IMR-90 (cell line): ENCODE measurements at regions of chr2 and their contacts with region 1.

Region 1: DNA sequence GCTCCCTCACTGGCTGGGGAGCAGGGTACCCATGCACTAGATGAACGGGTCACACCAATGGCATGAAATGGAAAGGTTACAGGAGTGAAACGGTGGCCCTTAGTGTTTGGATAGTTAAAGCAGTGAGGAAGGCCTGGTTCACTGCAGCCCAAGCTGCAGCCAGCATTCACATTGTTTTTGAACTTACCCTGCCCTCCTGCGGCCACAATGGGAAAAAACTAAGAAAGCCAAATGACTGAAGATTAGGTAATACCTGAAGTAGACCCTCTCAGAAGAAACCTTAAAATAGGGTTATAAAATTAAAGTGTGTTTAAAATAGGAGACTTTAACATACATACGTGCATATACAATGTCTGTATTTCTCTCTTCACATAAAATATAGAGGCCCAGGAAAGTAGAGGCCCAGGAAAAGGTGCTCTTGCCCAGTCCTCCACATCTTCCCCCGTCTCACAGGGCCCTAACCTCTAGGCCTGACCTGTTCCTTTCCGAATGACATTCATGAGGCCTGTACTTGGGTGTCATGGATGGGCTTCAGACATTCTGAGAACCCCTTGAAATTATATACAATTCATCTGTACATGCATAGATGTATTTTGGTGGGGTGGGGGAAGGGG is 33.3 kb downstream of the DOK1 start:
- DNase-seq: peak; percentile 74
- ATAC-seq: peak; percentile 88
- H3K4me3 ChIP-seq: no peak overlapping the region
- H3K27ac ChIP-seq: no peak overlapping the region
- H3K4me1 ChIP-seq: peaks cover 10% of the 10 kb centered on the region
- H3K27me3 ChIP-seq: peaks cover 10% of the 10 kb centered on the region
- CTCF ChIP-seq: peak; percentile 88
- POLR2A ChIP-seq: peak; percentile 47; the same call in 1 of the 2 replicates
- RAD21 ChIP-seq: peak; percentile 90

Region 2: DNA sequence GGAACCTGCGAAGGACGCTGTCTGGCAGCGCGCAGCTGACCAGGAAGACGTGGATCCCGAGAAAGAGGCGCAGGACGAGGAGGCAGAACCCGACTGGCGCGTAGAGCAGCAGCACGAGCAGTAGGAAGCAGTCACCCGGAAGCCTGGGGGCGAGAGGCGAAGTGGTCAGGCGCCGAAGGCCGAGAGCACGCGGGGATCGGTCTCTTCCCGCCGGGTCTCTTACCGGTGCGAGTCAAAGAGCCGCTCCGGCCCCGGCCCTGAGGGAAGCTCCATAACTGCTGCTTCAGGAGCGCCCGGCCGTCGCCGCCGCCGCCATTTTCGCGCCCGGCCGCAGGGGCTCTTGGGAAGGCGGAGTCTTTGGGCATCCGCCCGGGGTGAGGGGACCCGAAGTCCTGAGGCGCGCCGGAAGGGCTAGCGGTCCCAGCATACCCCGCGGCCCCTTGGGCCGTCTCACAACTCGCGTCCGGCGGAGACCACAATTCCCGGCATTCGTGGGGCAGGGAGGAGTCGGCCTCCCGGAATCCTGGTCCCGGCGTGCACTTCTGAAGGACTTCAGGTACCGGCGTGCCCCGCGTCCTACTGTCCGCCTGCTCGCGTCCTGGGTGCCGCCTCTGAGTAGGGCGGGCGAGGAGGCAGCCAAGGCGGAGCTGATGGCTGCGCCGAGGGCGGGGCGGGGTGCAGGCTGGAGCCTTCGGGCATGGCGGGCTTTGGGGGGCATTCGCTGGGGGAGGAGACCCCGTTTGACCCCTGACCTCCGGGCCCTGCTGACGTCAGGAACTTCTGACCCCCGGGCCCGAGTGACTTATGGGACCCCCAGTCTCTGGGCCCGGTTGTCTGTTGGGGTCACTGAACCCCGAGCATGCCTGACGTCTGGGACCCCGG is 58.2 kb before region 1 on chr2 and contains the starts of genes AUP1 and HTRA2:
- CTCF ChIA-PET with region 1: interaction called, 14 read pairs
- POLR2A ChIA-PET with region 1: interaction called, 4 read pairs
- dilution Hi-C with region 1: no loop called
- in situ Hi-C with region 1: no loop called
- intact Hi-C with region 1: loop called (anchors 1 kb)
- DNase-seq: peak; percentile 99
- ATAC-seq: peak; percentile 93
- H3K4me3 ChIP-seq: peak within 1 kb of the TSS; percentile 93
- H3K27ac ChIP-seq: peak within 1 kb of the TSS; percentile 85
- H3K4me1 ChIP-seq: peaks cover 12% of the 10 kb centered on the region
- H3K27me3 ChIP-seq: no peaks in the 10 kb centered on the region
- CTCF ChIP-seq: no peak
- POLR2A ChIP-seq: peak; percentile 93
- RAD21 ChIP-seq: peak; percentile 6
- total RNA-seq, gene AUP1: 45.8 and 47.5 TPM in 2 replicates
- total RNA-seq, gene HTRA2: 28.1 and 34.2 TPM in 2 replicates

Region 3: GRCh38 chr2:74553892-74554645 is 33.7 kb before region 1 on chr2 and contains the start of gene LOXL3:
- CTCF ChIA-PET with region 1: interaction called, 3 read pairs
- POLR2A ChIA-PET with region 1: interaction called, 19 read pairs
- dilution Hi-C with region 1: no loop called
- in situ Hi-C with region 1: no loop called
- intact Hi-C with region 1: loop called (anchors 1 kb)
- DNase-seq: peak; percentile 88
- ATAC-seq: peak; percentile 85
- H3K4me3 ChIP-seq: peak within 1 kb of the TSS; percentile 78
- H3K27ac ChIP-seq: peak within 1 kb of the TSS; percentile 91
- H3K4me1 ChIP-seq: peaks cover 23% of the 10 kb centered on the region
- H3K27me3 ChIP-seq: no peaks in the 10 kb centered on the region
- CTCF ChIP-seq: no peak
- POLR2A ChIP-seq: peak; percentile 30; the same call in 1 of the 2 replicates
- RAD21 ChIP-seq: no peak
- total RNA-seq, gene LOXL3: 14.2 and 17.9 TPM in 2 replicates

Region 4: GRCh38 chr2:74876081-74876886 is 288.5 kb after region 1 on chr2:
- CTCF ChIA-PET with region 1: no interaction called
- POLR2A ChIA-PET with region 1: no interaction called
- dilution Hi-C with region 1: no loop called
- in situ Hi-C with region 1: no loop called
- intact Hi-C with region 1: loop called (anchors 2 kb)
- DNase-seq: peak; percentile 46
- ATAC-seq: peak; percentile 78
- H3K4me3 ChIP-seq: no peak overlapping the region
- H3K27ac ChIP-seq: peak overlapping the region; percentile 19; the same call in 1 of the 2 replicates
- H3K4me1 ChIP-seq: peaks cover 16% of the 10 kb centered on the region
- H3K27me3 ChIP-seq: no peaks in the 10 kb centered on the region
- CTCF ChIP-seq: peak; percentile 73
- POLR2A ChIP-seq: no peak
- RAD21 ChIP-seq: peak; percentile 73

Region 5: DNA sequence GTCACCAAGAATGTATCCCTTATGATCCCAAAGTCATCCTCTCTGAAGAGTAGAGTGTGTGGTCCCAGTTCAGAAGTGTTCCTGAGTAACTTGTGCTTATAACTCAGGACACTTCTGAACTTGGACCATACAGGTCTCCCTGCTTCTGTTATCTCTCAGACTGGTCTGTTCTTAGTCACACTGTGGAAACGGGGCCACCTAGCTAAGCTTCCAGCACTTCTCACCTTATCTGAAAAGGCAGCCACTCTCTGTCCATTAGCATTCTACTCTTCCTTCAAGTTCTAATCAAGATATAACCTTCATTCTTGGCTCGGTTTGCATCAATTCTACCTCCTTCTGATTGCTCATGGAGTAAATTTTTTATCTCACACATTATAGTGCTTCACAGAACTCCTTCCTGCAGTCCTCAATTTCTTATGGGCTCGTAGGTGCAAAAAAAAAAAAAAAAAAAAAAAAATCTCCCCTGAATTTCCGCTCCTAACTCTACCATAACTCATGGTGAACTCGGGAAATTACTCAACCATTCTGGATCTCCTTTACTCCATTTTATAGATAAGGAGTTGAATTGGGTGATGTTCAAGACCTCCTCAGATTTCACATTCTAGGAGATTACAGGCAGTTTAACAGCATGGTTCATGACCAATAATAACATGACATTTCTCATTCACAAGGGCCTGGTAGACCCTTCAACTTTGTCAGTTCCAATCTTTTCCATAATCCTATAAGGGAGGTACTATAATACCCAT is 503.2 kb after region 1 on chr2:
- CTCF ChIA-PET with region 1: no interaction called
- POLR2A ChIA-PET with region 1: no interaction called
- dilution Hi-C with region 1: no loop called
- in situ Hi-C with region 1: no loop called
- intact Hi-C with region 1: no loop called
- DNase-seq: no peak
- ATAC-seq: no peak
- H3K4me3 ChIP-seq: no peak overlapping the region
- H3K27ac ChIP-seq: no peak overlapping the region
- H3K4me1 ChIP-seq: no peaks in the 10 kb centered on the region
- H3K27me3 ChIP-seq: no peaks in the 10 kb centered on the region
- CTCF ChIP-seq: no peak
- POLR2A ChIP-seq: no peak
- RAD21 ChIP-seq: no peak

Region 6: DNA sequence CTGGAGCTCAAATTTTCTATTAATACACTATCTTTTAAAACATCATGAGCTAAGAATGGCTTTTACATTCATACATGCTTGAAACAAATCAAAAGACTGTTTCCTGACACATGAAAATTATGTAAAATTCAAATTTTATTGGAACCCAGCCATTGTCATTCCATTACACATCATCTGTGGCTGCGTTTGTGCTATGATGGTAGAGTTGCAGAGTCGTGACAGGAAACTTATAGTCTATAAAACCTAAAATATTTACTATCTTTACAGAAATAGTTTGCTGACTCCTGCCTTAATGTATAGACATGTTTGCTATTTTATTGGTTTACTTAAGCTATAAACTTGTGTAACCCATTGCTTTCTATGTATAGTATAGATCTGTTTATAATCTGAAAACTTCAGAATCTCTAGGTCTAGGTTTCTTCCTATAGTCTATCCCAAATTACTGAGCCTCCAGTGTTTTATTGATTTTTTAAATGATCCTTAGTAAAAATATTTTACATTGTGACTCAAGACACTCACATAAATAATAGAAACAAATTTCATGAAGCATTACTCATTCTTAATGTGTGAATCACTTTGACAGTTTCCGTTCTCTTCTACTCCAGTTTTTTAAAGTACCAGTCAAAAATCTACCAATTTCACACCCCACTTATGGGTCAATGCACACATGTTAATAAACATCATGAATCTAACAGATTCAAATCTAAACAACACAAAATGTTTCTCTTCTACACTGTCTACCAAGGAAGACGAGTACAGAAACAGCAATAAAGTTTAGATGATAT is 1032.4 kb after region 1 on chr2:
- CTCF ChIA-PET with region 1: no interaction called
- POLR2A ChIA-PET with region 1: no interaction called
- dilution Hi-C with region 1: no loop called
- in situ Hi-C with region 1: no loop called
- intact Hi-C with region 1: no loop called
- DNase-seq: no peak
- ATAC-seq: peak; percentile 21; the same call in 1 of the 2 replicates
- H3K4me3 ChIP-seq: no peak overlapping the region
- H3K27ac ChIP-seq: no peak overlapping the region
- H3K4me1 ChIP-seq: no peaks in the 10 kb centered on the region
- H3K27me3 ChIP-seq: peaks cover 9% of the 10 kb centered on the region
- CTCF ChIP-seq: no peak
- POLR2A ChIP-seq: no peak
- RAD21 ChIP-seq: no peak